ENCODE measurements at regions of chr2 and their contacts with region 1.

Region 1: GRCh38 chr2:196068271-196069209 is at the start of gene DNAH7:
- DNase-seq: peak; percentile 82
- H3K4me3 Mint-ChIP-seq: peak within 1 kb of the TSS; percentile 93
- H3K27ac Mint-ChIP-seq: peak within 1 kb of the TSS; percentile 99
- H3K4me1 Mint-ChIP-seq: peaks cover 5% of the 10 kb centered on the region
- H3K27me3 Mint-ChIP-seq: no peaks in the 10 kb centered on the region
- CTCF ChIP-seq: peak; percentile 54
- total RNA-seq, gene DNAH7: 0.91 and 0.98 TPM in 2 replicates

Region 2: GRCh38 chr2:194545978-194546377 is 1522.6 kb before region 1 on chr2:
- CTCF ChIA-PET with region 1: no interaction called
- POLR2A ChIA-PET with region 1: no interaction called
- intact Hi-C with region 1: loop called (anchors 5 kb)
- DNase-seq: peak; percentile 16
- H3K4me3 Mint-ChIP-seq: no peak overlapping the region
- H3K27ac Mint-ChIP-seq: peak overlapping the region; percentile 16
- H3K4me1 Mint-ChIP-seq: peaks cover 9% of the 10 kb centered on the region
- H3K27me3 Mint-ChIP-seq: no peaks in the 10 kb centered on the region
- CTCF ChIP-seq: peak; percentile 35

Region 3: GRCh38 chr2:195498176-195498575 is 570.4 kb before region 1 on chr2:
- CTCF ChIA-PET with region 1: no interaction called
- POLR2A ChIA-PET with region 1: no interaction called
- intact Hi-C with region 1: loop called (anchors 5 kb)
- DNase-seq: peak; percentile 53
- H3K4me3 Mint-ChIP-seq: no peak overlapping the region
- H3K27ac Mint-ChIP-seq: no peak overlapping the region
- H3K4me1 Mint-ChIP-seq: peaks cover 8% of the 10 kb centered on the region
- H3K27me3 Mint-ChIP-seq: no peaks in the 10 kb centered on the region
- CTCF ChIP-seq: peak; percentile 23

Region 4: GRCh38 chr2:195575879-195576401 is 492.6 kb before region 1 on chr2:
- CTCF ChIA-PET with region 1: interaction called, 4 read pairs
- POLR2A ChIA-PET with region 1: interaction called, 3 read pairs
- intact Hi-C with region 1: loop called (anchors 10 kb)
- DNase-seq: peak; percentile 85
- H3K4me3 Mint-ChIP-seq: peak overlapping the region; percentile 36
- H3K27ac Mint-ChIP-seq: peak overlapping the region; percentile 79
- H3K4me1 Mint-ChIP-seq: peaks cover 22% of the 10 kb centered on the region
- H3K27me3 Mint-ChIP-seq: no peaks in the 10 kb centered on the region
- CTCF ChIP-seq: no peak

Region 5: GRCh38 chr2:195664528-195664927 is 404.0 kb before region 1 on chr2:
- CTCF ChIA-PET with region 1: interaction called, 32 read pairs
- POLR2A ChIA-PET with region 1: no interaction called
- intact Hi-C with region 1: loop called (anchors 1 kb)
- DNase-seq: no peak
- H3K4me3 Mint-ChIP-seq: no peak overlapping the region
- H3K27ac Mint-ChIP-seq: no peak overlapping the region
- H3K4me1 Mint-ChIP-seq: peaks cover 11% of the 10 kb centered on the region
- H3K27me3 Mint-ChIP-seq: no peaks in the 10 kb centered on the region
- CTCF ChIP-seq: peak; percentile 12

Region 6: DNA sequence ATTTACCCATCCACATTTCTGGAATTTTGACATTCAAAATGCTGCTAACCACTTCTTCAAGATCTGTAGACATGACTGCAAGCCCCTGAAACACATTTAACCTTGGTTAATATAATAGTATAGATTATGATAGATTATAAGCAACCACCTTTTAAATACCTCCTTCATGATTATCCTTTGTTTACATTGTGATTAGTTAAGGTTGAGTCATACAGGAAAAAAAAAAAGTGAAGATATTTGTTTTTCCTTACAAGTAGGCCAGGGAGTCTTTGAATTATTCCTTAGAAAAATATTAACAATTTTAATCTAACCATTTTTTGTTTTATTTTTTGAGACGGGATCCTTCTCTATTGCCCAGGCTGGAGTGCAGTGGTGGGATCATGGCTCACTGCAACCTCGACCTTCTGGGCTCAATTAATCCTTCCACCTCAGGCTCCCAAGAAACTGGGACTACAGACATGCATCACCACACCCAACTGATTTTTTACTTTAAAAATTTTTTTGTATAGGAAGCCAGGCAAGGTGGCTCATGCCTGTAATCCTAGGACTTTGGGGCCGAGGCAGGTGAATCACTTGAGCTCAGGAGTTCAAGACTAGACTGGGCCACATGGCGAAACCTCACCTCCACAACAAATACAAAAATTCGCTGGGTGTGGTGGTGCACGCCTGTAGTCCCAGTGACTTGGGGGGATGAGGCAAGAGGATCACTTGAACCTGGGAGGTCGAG is 312.2 kb before region 1 on chr2:
- CTCF ChIA-PET with region 1: no interaction called
- POLR2A ChIA-PET with region 1: no interaction called
- intact Hi-C with region 1: no loop called
- DNase-seq: peak; percentile 34
- H3K4me3 Mint-ChIP-seq: no peak overlapping the region
- H3K27ac Mint-ChIP-seq: no peak overlapping the region
- H3K4me1 Mint-ChIP-seq: peaks cover 4% of the 10 kb centered on the region
- H3K27me3 Mint-ChIP-seq: no peaks in the 10 kb centered on the region
- CTCF ChIP-seq: no peak

Region 7: DNA sequence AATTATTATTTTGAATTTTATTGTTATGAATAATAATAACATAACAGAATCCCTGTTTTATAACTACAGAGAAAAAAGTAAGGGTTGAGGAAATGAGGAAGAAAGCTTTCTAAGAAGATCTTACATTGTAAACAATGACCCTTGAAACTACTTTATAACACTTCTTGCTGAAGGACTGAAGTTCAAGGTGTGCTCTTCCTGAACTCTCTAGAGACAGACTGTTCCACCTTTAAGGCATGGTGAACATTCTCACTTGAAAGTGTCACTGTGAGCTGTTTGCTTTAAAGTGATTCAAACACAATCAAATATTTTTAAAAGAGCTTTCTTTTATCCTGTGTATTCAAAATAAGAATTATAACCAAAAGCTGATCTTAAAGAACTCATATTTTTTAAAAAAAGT is 131.4 kb before region 1 on chr2:
- CTCF ChIA-PET with region 1: no interaction called
- POLR2A ChIA-PET with region 1: no interaction called
- intact Hi-C with region 1: loop called (anchors 2 kb)
- DNase-seq: no peak
- H3K4me3 Mint-ChIP-seq: no peak overlapping the region
- H3K27ac Mint-ChIP-seq: no peak overlapping the region
- H3K4me1 Mint-ChIP-seq: no peaks in the 10 kb centered on the region
- H3K27me3 Mint-ChIP-seq: no peaks in the 10 kb centered on the region
- CTCF ChIP-seq: no peak

Region 8: DNA sequence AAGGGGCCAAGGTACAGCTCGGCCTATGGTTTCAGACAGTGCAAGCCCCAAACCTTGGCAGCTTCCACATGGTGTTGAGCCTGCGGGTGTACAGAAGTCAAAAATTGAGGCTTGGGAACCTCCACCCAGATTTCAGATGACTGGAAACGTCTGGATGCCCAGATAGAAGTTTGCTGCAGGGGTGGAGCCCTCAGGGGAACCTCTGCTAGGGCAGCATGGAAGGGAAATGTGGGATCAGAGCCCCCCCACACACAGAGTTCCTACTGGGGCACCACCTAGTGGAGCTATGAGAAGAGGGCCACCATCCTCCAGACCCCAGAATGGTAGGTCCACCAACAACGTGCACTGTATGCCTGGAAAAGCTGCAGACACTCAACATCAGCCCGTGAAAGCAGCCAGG is 15.1 kb after region 1 on chr2:
- CTCF ChIA-PET with region 1: interaction called, 38 read pairs
- POLR2A ChIA-PET with region 1: interaction called, 9 read pairs
- intact Hi-C with region 1: no loop called
- DNase-seq: no peak
- H3K4me3 Mint-ChIP-seq: no peak overlapping the region
- H3K27ac Mint-ChIP-seq: no peak overlapping the region
- H3K4me1 Mint-ChIP-seq: peaks cover 9% of the 10 kb centered on the region
- H3K27me3 Mint-ChIP-seq: no peaks in the 10 kb centered on the region
- CTCF ChIP-seq: no peak

Region 9: DNA sequence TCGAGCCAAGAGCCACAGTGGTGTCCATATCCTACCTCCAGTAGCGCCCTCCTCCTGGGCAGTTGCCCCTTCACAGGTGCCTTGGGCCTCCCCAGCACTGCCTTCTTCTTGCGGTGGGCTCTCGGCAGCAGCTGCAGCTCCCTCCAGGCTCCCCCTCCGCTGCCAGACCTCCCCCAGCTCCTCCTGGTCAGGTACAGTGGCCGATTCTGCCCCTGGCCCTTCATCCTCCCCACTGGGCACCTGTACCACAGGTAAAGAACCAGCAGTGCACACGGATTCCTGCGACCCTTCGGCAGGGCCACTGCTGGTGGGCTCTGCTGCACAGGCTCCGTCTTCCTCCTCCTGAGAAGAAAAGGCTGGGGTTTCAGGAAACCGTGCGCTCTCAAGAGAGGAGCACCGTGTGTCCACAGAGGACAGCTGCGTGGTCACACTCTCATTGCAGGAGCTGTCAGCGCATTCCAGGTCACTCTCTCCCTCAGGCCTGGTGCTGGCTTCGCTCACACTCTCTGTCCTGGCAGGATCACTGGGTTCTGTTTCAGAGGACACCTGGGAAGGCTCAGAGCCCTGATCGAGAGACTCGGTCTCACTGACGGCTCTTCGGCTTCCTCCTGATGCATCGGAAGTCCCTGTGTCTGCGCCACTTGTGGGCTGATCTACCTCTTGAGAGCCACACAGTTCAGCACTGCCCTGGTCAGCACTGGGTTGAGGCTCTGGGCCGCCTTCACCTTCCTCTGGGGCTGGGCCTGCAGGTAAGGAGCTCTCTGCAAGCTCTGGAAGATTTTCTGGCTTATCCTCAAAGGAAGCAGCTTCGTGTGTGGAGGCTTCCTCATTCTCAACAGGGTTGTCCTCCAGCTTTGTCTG is 250.2 kb after region 1 on chr2:
- CTCF ChIA-PET with region 1: no interaction called
- POLR2A ChIA-PET with region 1: no interaction called
- intact Hi-C with region 1: no loop called
- DNase-seq: no peak
- H3K4me3 Mint-ChIP-seq: no peak overlapping the region
- H3K27ac Mint-ChIP-seq: no peak overlapping the region
- H3K4me1 Mint-ChIP-seq: peaks cover 15% of the 10 kb centered on the region
- H3K27me3 Mint-ChIP-seq: no peaks in the 10 kb centered on the region
- CTCF ChIP-seq: no peak